Body of pancreas (tissue), 4 donors: ENCODE measurements at regions of chr20 and their contacts with region 1.

Region 1: DNA sequence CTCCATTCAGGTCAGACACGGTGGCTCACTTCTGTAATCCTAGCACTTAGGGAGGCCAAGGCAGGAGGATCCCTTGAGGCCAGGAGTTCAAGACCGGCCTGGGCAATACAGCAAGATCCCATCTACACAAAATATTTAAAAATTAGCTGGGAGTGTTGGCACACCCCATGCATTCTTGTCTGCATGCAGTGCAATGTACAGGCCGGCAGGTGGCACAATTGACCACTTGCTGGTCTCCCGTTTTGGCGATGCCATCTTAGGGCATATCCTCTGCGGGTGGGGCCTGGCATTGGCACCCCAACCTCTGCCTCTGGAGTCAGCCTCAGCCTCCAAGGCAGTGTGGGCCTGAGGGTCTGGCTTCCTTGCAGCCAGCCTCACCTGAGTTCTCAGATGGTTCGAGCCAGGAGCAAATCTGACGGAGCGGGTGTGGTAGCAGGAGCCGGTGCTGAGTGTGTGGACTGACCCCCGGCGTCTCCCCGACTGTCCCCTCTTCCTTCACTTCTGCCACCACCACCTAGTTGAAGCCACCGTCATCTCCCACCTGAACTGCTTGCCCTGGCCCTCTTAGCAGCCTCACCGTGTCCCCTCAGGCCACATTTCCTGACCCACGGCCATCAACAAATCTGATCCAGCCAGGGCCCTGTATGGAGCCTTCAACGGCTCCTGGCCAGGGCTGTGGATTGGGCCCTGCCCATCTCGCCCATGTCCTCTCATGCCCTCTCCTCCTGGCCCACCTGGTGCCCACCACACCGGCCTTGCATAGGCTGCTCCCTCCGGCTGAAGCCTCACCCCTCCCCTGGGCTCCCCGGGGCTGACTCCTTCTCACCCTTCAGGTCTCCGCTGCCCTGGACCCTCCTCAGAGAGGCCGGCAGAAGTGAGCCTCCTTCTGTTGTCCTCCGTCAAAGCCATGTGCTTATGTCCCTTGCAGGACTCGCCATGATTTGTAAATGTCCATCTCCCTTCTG is 44.0 kb downstream of the EFCAB8 start:
- DNase-seq: peak; percentile 56 to 65 (median 62)
- ATAC-seq: peak; percentile 64
- H3K4me3 ChIP-seq: no peak overlapping the region
- H3K27ac ChIP-seq: no peak overlapping the region
- H3K4me1 ChIP-seq: no peaks in the 10 kb centered on the region
- H3K27me3 ChIP-seq: no peaks in the 10 kb centered on the region
- CTCF ChIP-seq: peak; percentile 82 to 94 (median 89)
- POLR2A ChIP-seq: no peak

Region 2: DNA sequence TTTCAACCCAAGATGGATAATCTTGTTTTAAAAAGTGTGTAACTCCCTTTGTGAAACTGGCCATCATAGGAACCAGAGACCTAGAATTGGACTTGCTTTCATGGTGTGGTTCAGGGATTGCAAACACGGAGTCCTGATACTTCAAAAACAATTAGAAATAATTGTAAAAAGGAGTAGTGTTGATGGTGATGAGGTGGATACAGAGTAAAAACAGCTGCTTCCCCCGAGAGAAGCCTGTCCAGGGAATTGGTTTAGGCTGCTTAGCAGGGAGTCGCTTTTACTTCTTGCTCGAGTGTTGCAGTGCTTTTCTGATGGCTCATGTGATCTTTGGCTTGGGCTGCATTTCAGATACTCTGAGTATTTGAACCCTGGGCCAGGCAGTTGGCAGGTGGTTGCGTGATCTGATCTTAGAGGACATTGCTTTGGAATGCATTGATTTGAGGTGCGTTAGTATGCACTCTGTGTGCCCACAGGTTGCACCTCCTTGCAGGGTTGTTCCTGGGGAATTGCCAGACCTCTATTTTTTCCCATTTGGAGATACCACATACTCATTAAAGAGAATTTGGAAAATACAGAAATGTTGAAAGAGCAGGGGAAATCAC is 605.8 kb before region 1 on chr20:
- intact Hi-C with region 1: no loop called
- DNase-seq: no peak
- ATAC-seq: no peak
- H3K4me3 ChIP-seq: no peak overlapping the region
- H3K27ac ChIP-seq: peak overlapping the region in 2 of 4 donors; percentile 10 to 53
- H3K4me1 ChIP-seq: peaks cover 38% of the 10 kb centered on the region
- H3K27me3 ChIP-seq: no peaks in the 10 kb centered on the region
- CTCF ChIP-seq: no peak
- POLR2A ChIP-seq: no peak

Region 3: GRCh38 chr20:32559753-32560380 is 342.9 kb before region 1 on chr20:
- intact Hi-C with region 1: no loop called
- DNase-seq: no peak
- ATAC-seq: no peak
- H3K4me3 ChIP-seq: no peak overlapping the region
- H3K27ac ChIP-seq: no peak overlapping the region
- H3K4me1 ChIP-seq: peaks cover 6% of the 10 kb centered on the region
- H3K27me3 ChIP-seq: no peaks in the 10 kb centered on the region
- CTCF ChIP-seq: no peak
- POLR2A ChIP-seq: no peak

Region 4: DNA sequence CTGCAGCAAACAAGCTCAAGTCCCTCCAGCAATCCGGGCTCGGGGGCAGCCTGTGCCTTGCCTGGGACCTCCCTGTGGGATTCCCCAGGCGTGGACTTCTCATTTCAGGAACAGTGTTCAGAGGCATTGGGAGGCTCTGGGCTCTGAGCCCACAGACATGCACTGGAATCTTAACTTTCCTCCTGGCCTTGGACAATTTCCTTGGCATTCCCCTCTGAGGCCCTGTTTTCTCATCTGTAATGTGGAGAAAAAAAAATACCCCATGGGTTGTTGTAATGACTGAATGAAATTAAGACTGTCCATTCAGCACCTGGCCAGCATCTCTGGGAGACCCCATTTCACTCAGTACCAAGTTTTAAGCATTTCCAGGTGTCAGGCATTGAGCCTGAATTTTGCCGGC is 194.3 kb after region 1 on chr20:
- intact Hi-C with region 1: loop called (anchors 10 kb)
- DNase-seq: no peak
- ATAC-seq: no peak
- H3K4me3 ChIP-seq: no peak overlapping the region
- H3K27ac ChIP-seq: no peak overlapping the region
- H3K4me1 ChIP-seq: no peaks in the 10 kb centered on the region
- H3K27me3 ChIP-seq: no peaks in the 10 kb centered on the region
- CTCF ChIP-seq: no peak
- POLR2A ChIP-seq: no peak

Region 5: DNA sequence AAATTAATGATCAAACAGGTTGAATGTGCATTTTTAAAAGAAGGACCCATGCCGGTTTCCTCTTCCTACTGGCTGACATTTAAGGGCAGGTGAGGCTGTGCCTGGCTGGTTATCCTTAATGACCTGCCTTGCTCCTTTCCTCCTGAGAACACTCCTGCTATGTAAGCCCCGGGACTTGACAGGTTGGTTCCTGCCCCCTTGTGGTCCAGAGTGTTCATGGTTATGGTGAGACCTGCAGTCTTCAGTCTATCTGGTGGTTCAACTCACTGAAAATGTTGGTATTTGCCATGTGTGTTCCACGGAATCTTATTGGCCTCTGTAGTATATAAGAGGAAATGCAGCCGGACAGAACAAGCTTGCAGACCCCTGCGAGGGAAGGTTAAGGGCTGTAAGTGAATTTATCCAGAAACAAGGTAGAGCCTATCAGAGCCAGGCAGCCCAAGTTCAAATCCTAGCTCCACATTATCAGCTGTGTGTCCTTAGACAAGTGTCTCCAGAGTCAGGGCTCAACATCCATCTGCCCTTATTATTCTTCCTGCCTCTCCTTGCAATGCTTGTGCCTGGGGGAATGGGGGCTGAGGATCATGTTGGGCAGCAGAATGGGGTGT is 309.2 kb after region 1 on chr20:
- intact Hi-C with region 1: loop called (anchors 10 kb)
- DNase-seq: peak; percentile 76 to 86 (median 80)
- ATAC-seq: peak; percentile 75
- H3K4me3 ChIP-seq: no peak overlapping the region
- H3K27ac ChIP-seq: no peak overlapping the region
- H3K4me1 ChIP-seq: no peaks in the 10 kb centered on the region
- H3K27me3 ChIP-seq: no peaks in the 10 kb centered on the region
- CTCF ChIP-seq: peak in 6 of 7 experiments; percentile 34 to 80 (median 70)
- POLR2A ChIP-seq: no peak

Region 6: GRCh38 chr20:33291830-33292355 is 389.2 kb after region 1 on chr20:
- intact Hi-C with region 1: loop called (anchors 2 kb)
- DNase-seq: peak; percentile 42 to 69 (median 55)
- ATAC-seq: peak; percentile 55
- H3K4me3 ChIP-seq: no peak overlapping the region
- H3K27ac ChIP-seq: no peak overlapping the region
- H3K4me1 ChIP-seq: no peaks in the 10 kb centered on the region
- H3K27me3 ChIP-seq: no peaks in the 10 kb centered on the region
- CTCF ChIP-seq: peak; percentile 71 to 91 (median 82)
- POLR2A ChIP-seq: no peak